Right ventricle myocardium inferior (tissue), 1 donor: ENCODE measurements at regions of chr11 and their contacts with region 1.

Region 1: DNA sequence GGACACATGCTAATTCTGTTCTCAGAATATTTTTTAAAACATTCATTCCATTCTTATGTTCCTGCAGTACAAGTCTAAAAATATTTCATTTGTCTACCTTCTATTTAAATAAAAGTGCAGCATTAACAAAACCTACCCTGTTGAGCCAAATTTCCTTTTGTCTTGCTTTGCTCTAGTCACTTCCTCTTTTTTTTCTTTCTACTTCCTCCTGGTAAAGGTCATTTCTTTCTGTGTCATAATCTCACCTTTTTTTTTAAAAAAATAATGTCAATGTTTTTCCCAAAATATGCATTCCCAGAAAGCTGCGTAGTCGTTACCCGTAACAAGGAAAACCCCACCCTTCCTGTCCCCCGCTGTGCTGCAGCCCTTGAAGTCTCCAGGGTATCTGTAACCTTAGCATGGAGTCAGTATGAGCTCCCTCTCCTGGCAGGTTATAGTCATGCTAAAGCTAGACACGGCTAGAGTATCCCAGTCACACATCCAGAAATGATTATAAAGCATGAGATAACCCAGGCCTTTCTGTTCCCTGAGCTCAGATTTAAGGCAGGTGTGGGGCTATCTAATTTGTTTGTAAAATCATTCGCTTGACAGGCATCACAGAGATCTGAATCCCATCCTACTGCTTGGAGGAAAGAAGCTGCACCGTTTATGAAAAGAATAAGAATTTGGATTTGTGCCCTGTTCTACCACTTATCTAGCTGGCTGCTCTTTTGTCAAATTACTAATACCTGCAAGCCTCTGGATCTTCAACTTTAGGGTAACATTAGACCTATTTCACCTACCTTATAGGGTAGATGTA is 51.1 kb upstream of the EED start:
- DNase-seq: peak; percentile 74
- ATAC-seq: peak; percentile 98

Region 2: GRCh38 chr11:85947431-85948272 is 245.8 kb before region 1 on chr11:
- intact Hi-C with region 1: no loop called
- DNase-seq: no peak
- ATAC-seq: peak; percentile 73

Region 3: GRCh38 chr11:86041975-86042378 is 151.5 kb before region 1 on chr11:
- intact Hi-C with region 1: loop called (anchors 1 kb)
- DNase-seq: no peak
- ATAC-seq: peak; percentile 80

Region 4: DNA sequence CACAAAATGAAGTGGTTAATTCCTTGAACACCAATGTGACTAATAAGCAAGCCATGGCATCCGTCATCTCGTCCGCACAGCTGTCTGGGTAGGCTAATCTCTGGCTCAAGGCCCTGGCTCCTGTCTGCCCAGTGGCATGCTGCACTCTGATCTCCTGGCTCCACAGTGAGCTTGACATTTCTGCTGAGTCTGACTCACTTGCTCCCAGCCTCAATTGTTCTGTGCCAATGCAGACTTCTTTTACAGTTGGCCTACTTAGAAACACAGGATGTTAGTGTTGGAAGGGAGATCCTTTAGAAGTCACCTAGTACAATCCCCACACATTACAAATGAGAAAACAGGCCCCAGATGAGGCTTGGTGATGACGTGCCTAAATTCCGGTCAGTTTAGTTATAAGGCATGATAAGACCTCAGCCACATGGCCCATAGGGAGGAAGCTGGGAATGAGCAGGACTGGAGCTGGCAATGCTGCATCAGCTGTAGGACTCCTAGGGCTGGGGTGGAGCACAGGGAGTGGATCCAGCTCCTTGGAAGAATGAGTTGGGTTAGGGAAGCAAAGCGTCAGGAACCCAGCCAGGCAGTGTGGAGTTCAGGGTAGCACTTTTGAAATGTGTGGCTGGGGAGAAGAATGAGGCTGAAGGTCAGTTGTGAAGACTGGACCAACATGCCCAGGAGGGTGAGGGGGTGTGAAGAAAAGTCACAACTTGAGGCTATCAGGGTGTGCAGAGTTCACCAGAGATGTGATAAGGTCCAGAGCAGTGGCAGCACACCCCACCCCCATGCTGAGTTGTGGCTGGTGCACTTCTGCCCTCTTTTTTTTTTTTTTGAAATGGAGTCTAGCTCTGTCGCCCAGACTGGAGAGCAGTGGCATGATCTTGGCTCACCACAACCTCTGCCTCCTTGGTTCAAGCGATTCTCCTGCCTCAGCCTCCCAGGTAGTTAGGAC is 19.1 kb before region 1 on chr11:
- intact Hi-C with region 1: loop called (anchors 2 kb)
- DNase-seq: peak; percentile 86
- ATAC-seq: peak; percentile 94